Activated B cell treated with CpG ODN at 0.5 μM for 24 hours (primary cell): ENCODE measurements at regions of chr5 and their contacts with region 1.

Region 1: DNA sequence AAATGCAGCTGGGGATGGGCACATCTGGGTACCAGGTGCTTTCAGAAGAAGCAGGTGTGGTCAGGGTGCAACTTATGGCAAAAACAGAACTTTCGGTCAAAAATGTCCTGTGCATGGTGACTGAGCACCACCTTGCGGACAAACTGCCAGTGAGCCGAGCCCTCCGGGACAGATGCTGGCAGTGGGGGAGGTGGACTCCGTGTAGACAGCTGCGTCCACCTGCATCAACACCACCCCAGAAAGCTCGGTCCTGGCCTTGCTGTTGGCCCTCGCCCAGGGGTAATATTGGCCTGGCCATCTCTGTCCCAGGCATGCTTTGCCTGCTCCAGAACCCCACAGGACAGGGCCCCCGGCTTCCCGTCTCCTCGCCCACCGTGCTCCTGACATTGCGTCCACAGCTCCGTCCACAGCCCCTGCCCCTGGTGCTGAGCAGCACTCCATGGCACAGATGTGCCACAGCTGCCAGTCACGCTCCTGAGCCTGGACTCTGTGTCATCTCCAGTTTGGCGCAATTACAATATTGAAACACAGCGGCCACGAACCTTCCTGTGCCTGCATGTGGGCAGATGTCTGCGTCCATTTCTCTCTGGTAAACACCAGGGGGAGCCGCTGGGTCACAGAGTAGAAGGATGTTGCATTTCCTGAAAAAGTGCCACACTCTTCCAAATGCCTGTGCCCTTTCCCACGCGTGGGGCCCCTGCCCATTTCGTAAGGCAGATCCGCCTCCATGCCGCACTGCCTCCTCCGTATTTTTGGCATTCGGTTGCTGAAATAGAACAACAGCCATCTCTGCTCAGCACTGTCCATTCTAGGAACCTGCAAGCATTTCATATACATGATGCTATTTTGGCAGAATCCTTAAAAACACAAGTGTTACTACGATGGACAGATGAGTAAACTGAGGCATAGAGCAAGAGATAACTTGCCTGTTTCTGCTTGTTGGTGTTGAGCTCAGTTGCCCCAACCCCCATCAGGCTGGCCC is 33.4 kb upstream of the SLC6A19 start:
- DNase-seq: peak; percentile 44
- ATAC-seq: peak; percentile 82
- H3K4me3 Mint-ChIP-seq: peak overlapping the region; percentile 80
- H3K27ac Mint-ChIP-seq: no peak overlapping the region
- H3K4me1 Mint-ChIP-seq: peaks cover 12% of the 10 kb centered on the region
- H3K27me3 Mint-ChIP-seq: peaks cover 10% of the 10 kb centered on the region
- CTCF ChIP-seq: peak; percentile 86

Region 2: DNA sequence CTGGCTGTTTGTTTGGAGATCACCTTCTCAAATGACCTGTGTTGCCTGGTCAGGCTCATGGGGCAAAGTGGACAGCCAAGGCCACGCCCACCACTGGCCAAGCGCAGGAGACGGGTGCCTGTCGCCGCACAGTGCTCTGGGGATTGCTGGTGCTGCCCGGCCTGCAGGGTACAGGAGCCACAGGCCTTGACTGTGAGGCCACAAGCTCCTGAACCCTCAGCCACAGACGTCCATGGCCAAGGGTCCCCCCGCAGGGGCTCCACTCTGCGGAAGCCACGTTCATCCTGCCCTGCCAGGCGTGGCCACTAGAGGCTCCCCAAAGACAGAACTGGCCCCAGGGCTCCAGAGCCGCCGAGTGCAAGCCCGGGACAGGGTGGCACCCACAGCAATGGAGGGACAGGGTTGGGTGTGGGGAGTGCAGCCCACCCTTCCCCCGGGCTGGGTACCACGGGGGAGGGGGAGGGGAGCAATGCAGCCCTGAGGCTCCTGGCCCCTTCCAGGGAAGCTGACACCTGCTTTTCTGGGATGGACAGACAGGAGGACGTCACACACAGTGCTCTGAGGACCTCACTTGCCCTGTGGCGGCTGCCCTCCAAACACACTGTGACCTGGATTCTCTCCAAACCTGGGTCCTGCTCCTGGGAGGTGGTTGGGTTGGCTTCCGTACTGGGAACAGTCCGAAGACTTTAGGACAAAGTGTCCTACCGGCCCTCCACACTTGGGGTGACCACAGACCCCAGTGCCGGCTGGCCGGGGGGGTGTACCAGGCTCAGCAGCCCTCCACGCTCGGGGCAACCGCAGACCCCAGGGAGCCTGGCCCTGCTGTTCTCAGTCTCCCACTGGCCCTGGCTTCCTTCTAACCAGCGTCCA is 496.3 kb before region 1 on chr5:
- CTCF ChIA-PET with region 1: no interaction called
- POLR2A ChIA-PET with region 1: no interaction called
- intact Hi-C with region 1: loop called (anchors 5 kb)
- DNase-seq: peak; percentile 50
- ATAC-seq: peak; percentile 84
- H3K4me3 Mint-ChIP-seq: no peak overlapping the region
- H3K27ac Mint-ChIP-seq: no peak overlapping the region
- H3K4me1 Mint-ChIP-seq: peaks cover 13% of the 10 kb centered on the region
- H3K27me3 Mint-ChIP-seq: peaks cover 8% of the 10 kb centered on the region
- CTCF ChIP-seq: no peak

Region 3: DNA sequence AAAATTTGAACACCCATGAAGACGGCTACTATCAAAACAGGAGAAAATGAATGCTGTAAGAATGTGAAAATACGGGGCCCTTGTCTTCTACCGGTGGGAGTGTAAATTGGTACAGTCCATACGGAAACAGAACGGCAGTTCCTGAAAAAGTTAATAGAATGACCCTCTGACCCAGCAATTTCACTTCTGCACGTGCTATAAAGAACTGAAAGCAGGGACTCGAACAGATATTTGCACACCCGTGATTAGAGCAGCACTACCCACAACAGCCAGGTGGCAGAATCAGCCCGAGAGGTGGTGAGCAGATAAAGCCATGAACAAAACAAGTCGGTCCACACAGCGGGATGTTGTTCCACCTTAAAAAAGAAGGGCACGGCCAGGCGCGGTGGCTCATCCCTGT is 33.5 kb before region 1 on chr5:
- CTCF ChIA-PET with region 1: interaction called, 17 read pairs
- POLR2A ChIA-PET with region 1: no interaction called
- intact Hi-C with region 1: loop called (anchors 1 kb)
- DNase-seq: no peak
- ATAC-seq: peak; percentile 81
- H3K4me3 Mint-ChIP-seq: peak overlapping the region; percentile 52
- H3K27ac Mint-ChIP-seq: peak overlapping the region; percentile 59
- H3K4me1 Mint-ChIP-seq: peaks cover 52% of the 10 kb centered on the region
- H3K27me3 Mint-ChIP-seq: peaks cover 5% of the 10 kb centered on the region
- CTCF ChIP-seq: no peak

Region 4: DNA sequence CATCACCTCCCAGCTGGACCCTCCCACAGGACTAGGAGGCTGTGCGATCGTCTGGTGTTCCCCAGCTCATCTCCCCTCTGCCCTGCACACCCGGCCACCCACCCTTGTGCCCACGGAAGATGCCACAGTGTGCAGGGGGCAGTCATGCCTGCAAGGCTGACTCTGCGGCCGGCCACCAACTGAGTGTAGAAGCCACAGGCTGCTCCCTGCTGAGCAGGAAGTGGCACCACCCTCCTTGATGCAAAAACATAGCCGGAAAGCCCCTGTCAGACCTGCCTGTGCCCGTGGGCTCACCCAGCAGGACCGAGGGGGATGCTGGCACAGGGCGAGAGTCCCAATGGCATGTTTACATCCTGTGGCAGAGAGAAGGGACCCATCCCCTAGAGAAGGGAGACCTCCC is 15.9 kb before region 1 on chr5:
- CTCF ChIA-PET with region 1: interaction called, 6 read pairs
- POLR2A ChIA-PET with region 1: no interaction called
- intact Hi-C with region 1: loop called (anchors 1 kb)
- DNase-seq: peak; percentile 37
- ATAC-seq: peak; percentile 87
- H3K4me3 Mint-ChIP-seq: peak overlapping the region; percentile 63
- H3K27ac Mint-ChIP-seq: peak overlapping the region; percentile 80
- H3K4me1 Mint-ChIP-seq: peaks cover 45% of the 10 kb centered on the region
- H3K27me3 Mint-ChIP-seq: peaks cover 18% of the 10 kb centered on the region
- CTCF ChIP-seq: no peak

Region 5: DNA sequence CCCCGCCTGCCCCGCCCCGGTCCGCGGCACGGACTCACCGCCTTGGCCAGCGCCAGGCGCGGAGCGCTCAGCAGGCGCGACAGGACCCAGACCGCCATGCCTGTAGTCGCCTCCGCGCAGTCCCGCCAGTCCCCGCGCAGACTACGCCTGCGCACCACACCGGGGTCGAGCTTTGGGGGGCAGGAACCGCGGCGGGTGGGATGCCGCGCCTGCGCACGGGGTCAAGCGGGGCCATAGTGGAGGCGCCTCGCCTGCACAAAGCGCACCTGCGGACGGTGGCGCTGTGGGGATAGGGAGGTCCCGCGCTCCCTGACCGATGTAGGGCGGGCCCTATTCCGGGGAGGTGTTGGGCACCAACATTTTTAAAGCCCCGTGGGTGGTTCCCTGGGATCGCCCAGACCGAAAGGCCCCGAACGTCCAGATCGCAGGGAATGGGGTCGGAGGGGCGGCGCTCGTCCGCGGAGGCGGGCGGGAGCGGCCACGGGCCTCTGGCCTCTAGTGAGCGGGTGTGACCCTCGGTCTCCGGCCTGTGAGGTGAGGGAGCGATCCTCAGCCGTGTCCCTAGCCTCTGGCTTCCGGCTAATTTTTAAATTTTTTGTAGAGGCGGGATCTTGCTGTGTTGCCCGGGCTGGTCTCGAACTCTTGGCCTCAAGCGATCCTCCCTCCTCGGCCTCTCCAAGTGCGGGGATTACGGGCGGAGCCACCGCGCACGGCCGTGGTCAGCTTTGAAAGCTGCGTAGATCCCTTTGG is 426.5 kb after region 1 on chr5:
- CTCF ChIA-PET with region 1: no interaction called
- POLR2A ChIA-PET with region 1: interaction called, 4 read pairs
- intact Hi-C with region 1: loop called (anchors 1 kb)
- DNase-seq: peak; percentile 81
- ATAC-seq: peak; percentile 94
- H3K4me3 Mint-ChIP-seq: peak overlapping the region; percentile 82
- H3K27ac Mint-ChIP-seq: peak overlapping the region; percentile 56
- H3K4me1 Mint-ChIP-seq: peaks cover 19% of the 10 kb centered on the region
- H3K27me3 Mint-ChIP-seq: no peaks in the 10 kb centered on the region
- CTCF ChIP-seq: no peak